H1 (cell line): ENCODE measurements at regions of chr20 and their contacts with region 1.

Region 1: DNA sequence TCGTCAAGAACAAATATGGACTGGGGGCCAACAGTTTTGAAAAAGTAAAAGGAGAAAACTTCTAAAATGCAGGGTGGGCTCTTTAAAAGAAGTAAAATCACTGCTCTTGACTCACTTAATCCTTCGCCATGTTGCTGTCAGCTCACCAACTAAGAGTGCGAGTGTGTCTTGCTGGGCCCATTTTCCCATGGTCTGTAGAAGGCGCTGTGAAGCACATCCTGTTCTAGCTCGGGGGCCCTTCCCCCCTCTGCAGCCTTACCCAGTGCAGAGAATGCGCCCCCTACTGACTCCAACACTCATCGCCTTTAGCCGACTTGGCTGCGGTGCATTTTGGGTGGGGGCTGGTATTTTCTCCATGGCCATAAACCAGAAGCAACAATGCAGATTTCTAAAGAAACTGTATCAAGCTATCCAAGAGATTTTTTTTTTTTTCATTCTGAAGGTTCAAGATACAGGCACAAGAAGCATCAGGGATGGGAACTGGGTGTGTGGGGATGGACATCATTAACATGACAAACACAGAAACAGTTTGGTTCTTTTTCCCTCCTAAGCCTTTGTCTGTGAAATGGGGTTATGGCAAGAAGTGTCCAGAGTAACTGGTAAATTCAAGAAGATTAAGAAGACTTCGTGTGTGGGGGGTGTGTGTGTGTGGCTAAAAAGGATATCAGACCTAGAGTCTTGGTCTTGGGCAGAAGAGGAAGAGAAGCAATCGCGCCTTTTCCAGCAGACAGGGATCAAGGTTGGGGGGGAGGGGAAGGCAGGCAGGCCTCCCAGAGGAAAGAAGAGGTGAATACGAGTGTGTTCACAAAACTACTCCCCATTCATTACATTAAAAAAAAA is 1.7 kb downstream of the ADNP start:
- DNase-seq: peak; percentile 89 to 91
- H3K4me3 ChIP-seq: peak overlapping the region; percentile 82 to 91 (median 86)
- H3K27ac ChIP-seq: peak overlapping the region; percentile 82
- H3K4me1 ChIP-seq: peaks cover 4 to 23% (median 9%) of the 10 kb centered on the region in 4 experiments; a peak in 6 of 7 replicates
- H3K27me3 ChIP-seq: no peaks in the 10 kb centered on the region
- CTCF ChIP-seq: peak; percentile 98 to 99 (median 99)
- EP300 ChIP-seq: peak in 1 of 2 experiments; percentile 87; a peak in 1 of 3 replicates
- POLR2A ChIP-seq: peak; percentile 51 to 62; a peak in 2 of 3 replicates
- RAD21 ChIP-seq: peak; percentile 59 to 73

Region 2: DNA sequence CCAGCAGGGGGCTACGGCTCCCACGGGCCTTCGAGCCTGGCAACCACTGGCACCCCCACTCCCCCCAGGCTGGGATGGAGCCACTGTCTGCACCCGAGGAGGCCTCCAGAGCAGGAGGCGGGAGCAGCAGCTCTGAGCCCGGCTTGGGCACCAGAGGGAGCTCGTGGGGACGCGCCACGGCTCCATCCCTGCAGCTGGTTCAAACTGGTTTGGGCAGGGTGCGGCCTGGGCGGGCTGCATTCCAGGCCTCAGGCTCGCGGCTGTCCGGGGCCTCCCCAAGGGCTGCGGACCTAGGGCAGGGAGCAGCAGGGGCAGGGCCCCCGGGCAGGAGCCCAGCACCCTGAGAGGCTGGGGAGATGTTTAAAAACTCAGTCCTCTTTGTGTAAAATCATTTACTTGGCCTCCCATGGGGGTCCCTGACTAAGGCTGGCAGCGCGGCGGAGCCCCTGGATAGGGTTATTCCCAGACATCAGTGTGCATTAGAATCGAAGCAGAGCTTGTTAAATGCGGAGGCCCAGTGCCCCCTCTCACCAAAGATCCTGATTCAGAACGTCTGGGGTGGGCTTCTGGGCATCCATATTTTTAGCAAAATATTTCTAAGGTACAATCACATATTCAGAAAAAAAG is 138.8 kb before region 1 on chr20:
- CTCF ChIA-PET with region 1: interaction called, 21 read pairs
- POLR2A ChIA-PET with region 1: interaction called, 30 read pairs
- DNase-seq: peak; percentile 78 to 93
- H3K4me3 ChIP-seq: peak overlapping the region in 2 of 4 experiments; percentile 1 to 29; a peak in 2 of 8 replicates
- H3K27ac ChIP-seq: 0 out of 2 replicates have a peak overlapping the region, but pooled peaks have one; percentile 32
- H3K4me1 ChIP-seq: peaks cover 2 to 4% (median 3%) of the 10 kb centered on the region in 4 experiments; a peak in 5 of 7 replicates
- H3K27me3 ChIP-seq: no peaks in the 10 kb centered on the region; a peak in 1 of 7 replicates
- CTCF ChIP-seq: peak; percentile 69 to 84 (median 82)
- EP300 ChIP-seq: peak in 1 of 2 experiments; percentile 85; a peak in 1 of 3 replicates
- POLR2A ChIP-seq: peak in 1 of 2 experiments; percentile 74; a peak in 2 of 3 replicates
- RAD21 ChIP-seq: peak; percentile 28 to 54

Region 3: GRCh38 chr20:50819349-50819748 is 110.2 kb before region 1 on chr20:
- CTCF ChIA-PET with region 1: interaction called, 15 read pairs
- POLR2A ChIA-PET with region 1: interaction called, 9 read pairs
- DNase-seq: no peak
- H3K4me3 ChIP-seq: no peak overlapping the region
- H3K27ac ChIP-seq: no peak overlapping the region
- H3K4me1 ChIP-seq: peaks cover 0 to 9% (median 4%) of the 10 kb centered on the region in 4 experiments; a peak in 4 of 7 replicates
- H3K27me3 ChIP-seq: no peaks in the 10 kb centered on the region
- CTCF ChIP-seq: no peak
- EP300 ChIP-seq: no peak
- POLR2A ChIP-seq: no peak
- RAD21 ChIP-seq: no peak

Region 4: GRCh38 chr20:50870561-50871161 is 58.9 kb before region 1 on chr20:
- CTCF ChIA-PET with region 1: interaction called, 5 read pairs
- POLR2A ChIA-PET with region 1: interaction called, 13 read pairs
- DNase-seq: peak; percentile 84 to 86
- H3K4me3 ChIP-seq: peak overlapping the region; percentile 28 to 57 (median 40)
- H3K27ac ChIP-seq: peak overlapping the region; percentile 80
- H3K4me1 ChIP-seq: peaks cover 6 to 21% (median 16%) of the 10 kb centered on the region in 4 experiments
- H3K27me3 ChIP-seq: no peaks in the 10 kb centered on the region
- CTCF ChIP-seq: no peak
- EP300 ChIP-seq: peak in 1 of 2 experiments; percentile 44; a peak in 1 of 3 replicates
- POLR2A ChIP-seq: peak in 1 of 2 experiments; percentile 73; a peak in 2 of 3 replicates
- RAD21 ChIP-seq: peak in 1 of 2 experiments; percentile 1; a peak in 1 of 4 replicates

Region 5: GRCh38 chr20:50913690-50914375 is 15.7 kb before region 1 on chr20:
- CTCF ChIA-PET with region 1: interaction called, 14 read pairs
- POLR2A ChIA-PET with region 1: interaction called, 206 read pairs
- DNase-seq: no peak
- H3K4me3 ChIP-seq: no peak overlapping the region
- H3K27ac ChIP-seq: no peak overlapping the region
- H3K4me1 ChIP-seq: peaks cover 0 to 12% (median 2%) of the 10 kb centered on the region in 4 experiments; a peak in 3 of 7 replicates
- H3K27me3 ChIP-seq: no peaks in the 10 kb centered on the region
- CTCF ChIP-seq: no peak
- EP300 ChIP-seq: no peak
- POLR2A ChIP-seq: no peak
- RAD21 ChIP-seq: no peak

Region 6: GRCh38 chr20:50958615-50959542 is 29.4 kb after region 1 on chr20 and contains the start of gene MOCS3:
- CTCF ChIA-PET with region 1: interaction called, 6 read pairs
- POLR2A ChIA-PET with region 1: interaction called, 44 read pairs
- DNase-seq: peak; percentile 38 to 78
- H3K4me3 ChIP-seq: peak within 1 kb of the TSS; percentile 77 to 99 (median 94)
- H3K27ac ChIP-seq: peak within 1 kb of the TSS; percentile 98
- H3K4me1 ChIP-seq: peaks cover 4 to 8% (median 6%) of the 10 kb centered on the region in 4 experiments
- H3K27me3 ChIP-seq: no peaks in the 10 kb centered on the region
- CTCF ChIP-seq: no peak
- EP300 ChIP-seq: peak in 1 of 2 experiments; percentile 98; a peak in 2 of 3 replicates
- POLR2A ChIP-seq: no peak
- RAD21 ChIP-seq: no peak
- total RNA-seq, gene MOCS3: 6.1 and 6.3 TPM in 2 replicates

Region 7: GRCh38 chr20:51001758-51002157 is 72.2 kb after region 1 on chr20:
- CTCF ChIA-PET with region 1: no interaction called
- POLR2A ChIA-PET with region 1: no interaction called
- DNase-seq: no peak
- H3K4me3 ChIP-seq: no peak overlapping the region
- H3K27ac ChIP-seq: no peak overlapping the region
- H3K4me1 ChIP-seq: no peaks in the 10 kb centered on the region
- H3K27me3 ChIP-seq: peaks cover 0 to 2% (median 0%) of the 10 kb centered on the region in 4 experiments; a peak in 2 of 7 replicates
- CTCF ChIP-seq: no peak
- EP300 ChIP-seq: no peak
- POLR2A ChIP-seq: no peak
- RAD21 ChIP-seq: no peak